ENCODE measurements at regions of chr22 and their contacts with region 1.

Region 1: GRCh38 chr22:24189249-24190158 is 8.2 kb downstream of the SUSD2 start:
- DNase-seq: peak; percentile 59 to 76 (median 62)
- H3K4me3 ChIP-seq: peak overlapping the region in 1 of 3 experiments; percentile 2
- H3K4me3 Mint-ChIP-seq: no peak overlapping the region
- H3K27ac ChIP-seq: no peak overlapping the region
- H3K27ac Mint-ChIP-seq: peak overlapping the region in 1 of 7 donors; percentile 13
- H3K4me1 ChIP-seq: peaks cover 4 to 7% of the 10 kb centered on the region in 2 donors
- H3K4me1 Mint-ChIP-seq: peaks cover 4% of the 10 kb centered on the region
- H3K27me3 ChIP-seq: no peaks in the 10 kb centered on the region
- H3K27me3 Mint-ChIP-seq: peaks cover 0 to 4% (median 4%) of the 10 kb centered on the region in 3 donors
- CTCF ChIP-seq: peak; percentile 87

Region 2: GRCh38 chr22:23696326-23696851 is 493.1 kb before region 1 on chr22:
- intact Hi-C with region 1: no loop called
- DNase-seq: peak; percentile 88 to 91 (median 89)
- H3K4me3 ChIP-seq: peak overlapping the region in 1 of 3 experiments; percentile 45
- H3K4me3 Mint-ChIP-seq: peak overlapping the region; percentile 71 to 87
- H3K27ac ChIP-seq: peak overlapping the region; percentile 78 to 90
- H3K27ac Mint-ChIP-seq: peak overlapping the region; percentile 95 to 98 (median 97)
- H3K4me1 ChIP-seq: peaks cover 40 to 41% of the 10 kb centered on the region in 2 donors
- H3K4me1 Mint-ChIP-seq: peaks cover 41% of the 10 kb centered on the region
- H3K27me3 ChIP-seq: no peaks in the 10 kb centered on the region
- H3K27me3 Mint-ChIP-seq: no peaks in the 10 kb centered on the region
- CTCF ChIP-seq: no peak

Region 3: DNA sequence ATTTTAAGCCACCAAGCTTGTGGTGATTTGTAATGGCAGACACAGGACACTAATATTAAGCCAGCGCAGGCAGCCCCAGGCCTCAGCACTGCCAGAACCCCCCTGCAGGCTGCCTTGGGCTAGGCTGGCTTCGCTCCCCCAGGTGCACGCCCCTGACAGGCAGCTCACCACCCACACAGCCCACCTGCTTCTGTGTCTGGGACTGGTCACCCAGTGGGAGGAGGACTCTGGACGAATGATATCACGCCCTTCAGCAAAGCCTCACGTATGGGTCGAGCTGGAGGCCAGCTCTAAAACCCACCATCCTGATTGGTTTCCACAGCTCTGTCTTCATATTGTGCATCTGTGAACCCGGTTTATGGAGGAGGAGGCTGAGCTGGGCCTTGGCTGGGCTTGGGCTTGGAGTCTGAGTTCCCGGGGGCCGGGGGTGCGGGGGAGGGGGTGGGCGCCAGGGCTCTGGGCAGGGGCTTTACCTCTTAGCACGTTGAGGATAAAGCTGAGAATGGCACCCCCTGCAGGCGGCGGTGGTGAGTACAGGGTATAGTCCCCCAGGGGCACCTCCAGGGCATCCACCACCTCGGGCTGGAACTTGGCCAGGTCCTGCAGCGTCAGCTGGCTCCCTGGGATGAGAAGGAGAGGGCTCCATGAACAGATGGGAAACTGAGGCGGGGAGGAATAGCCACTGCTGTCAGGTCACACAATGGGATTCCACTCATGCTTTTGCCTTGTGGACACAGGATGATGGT is 41.6 kb after region 1 on chr22:
- intact Hi-C with region 1: loop called (anchors 2 to 5 kb)
- DNase-seq: peak; percentile 34 to 67 (median 55)
- H3K4me3 ChIP-seq: no peak overlapping the region
- H3K4me3 Mint-ChIP-seq: no peak overlapping the region
- H3K27ac ChIP-seq: no peak overlapping the region
- H3K27ac Mint-ChIP-seq: peak overlapping the region in 1 of 7 donors; percentile 37
- H3K4me1 ChIP-seq: no peaks in the 10 kb centered on the region
- H3K4me1 Mint-ChIP-seq: no peaks in the 10 kb centered on the region
- H3K27me3 ChIP-seq: no peaks in the 10 kb centered on the region
- H3K27me3 Mint-ChIP-seq: peaks cover 0 to 2% (median 1%) of the 10 kb centered on the region in 3 donors
- CTCF ChIP-seq: peak; percentile 84

Region 4: DNA sequence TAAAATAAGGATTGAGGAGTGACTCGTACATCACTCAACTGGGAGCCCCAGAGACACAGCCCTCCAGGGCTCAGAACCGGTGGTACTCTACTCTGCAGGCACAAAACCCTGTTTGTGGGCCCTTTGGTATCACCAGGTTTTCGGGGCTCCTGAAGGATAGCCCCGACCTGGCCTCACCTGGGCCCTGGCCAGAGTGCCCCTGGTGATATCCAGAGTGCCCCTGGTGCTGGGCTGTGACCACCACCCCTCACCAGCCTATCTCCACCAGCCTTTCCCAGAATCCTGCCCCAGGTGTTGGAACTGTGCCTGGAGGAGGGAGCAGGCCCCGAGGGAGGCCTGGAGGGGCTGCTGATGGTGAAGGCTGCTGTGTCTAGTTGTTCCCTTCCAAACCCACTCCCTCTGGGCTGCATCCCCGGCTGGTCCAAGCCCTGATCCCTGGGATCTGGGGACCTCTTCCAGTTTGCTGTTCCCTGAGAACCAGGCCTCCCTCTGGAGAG is 57.6 kb after region 1 on chr22:
- intact Hi-C with region 1: loop called (anchors 2 to 5 kb)
- DNase-seq: no peak
- H3K4me3 ChIP-seq: no peak overlapping the region
- H3K4me3 Mint-ChIP-seq: no peak overlapping the region
- H3K27ac ChIP-seq: no peak overlapping the region
- H3K27ac Mint-ChIP-seq: peak overlapping the region in 4 of 7 donors; percentile 28 to 69 (median 43)
- H3K4me1 ChIP-seq: peaks cover 32% of the 10 kb centered on the region in 2 donors
- H3K4me1 Mint-ChIP-seq: peaks cover 36% of the 10 kb centered on the region
- H3K27me3 ChIP-seq: no peaks in the 10 kb centered on the region
- H3K27me3 Mint-ChIP-seq: peaks cover 0 to 9% (median 4%) of the 10 kb centered on the region in 3 donors
- CTCF ChIP-seq: no peak

Measured in CD14-positive monocyte (primary cell).